ENCODE measurements at regions of chr4 and their contacts with region 1.

Region 1: DNA sequence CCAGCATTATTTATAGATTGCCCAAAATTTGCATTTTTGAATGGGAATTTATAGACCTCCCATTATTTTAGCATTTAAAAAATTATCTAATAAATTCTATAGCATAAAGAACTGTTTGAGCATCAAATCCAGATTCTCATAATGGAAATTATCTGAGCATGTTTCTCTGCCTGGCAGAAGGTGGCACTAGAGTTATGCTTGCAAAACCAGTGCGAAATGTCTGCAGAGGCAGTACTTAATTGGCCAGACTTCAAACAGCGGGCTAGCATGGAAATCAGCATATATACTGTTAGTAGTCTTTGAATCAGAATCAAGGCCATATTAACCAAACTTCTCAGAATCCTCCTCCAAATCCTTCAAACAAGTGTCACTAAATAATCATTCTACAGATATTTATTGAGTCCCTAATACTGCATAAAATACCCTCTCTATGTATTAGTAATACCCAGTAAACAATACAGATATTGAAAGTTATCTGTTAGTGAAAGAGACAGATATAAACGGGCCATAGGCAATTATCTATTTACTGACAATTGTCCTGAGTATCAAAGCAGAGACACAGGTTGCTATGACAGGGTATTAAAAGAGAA is 78.7 kb upstream of the DCLK2 start:
- DNase-seq: peak in 3 of 5 donors; percentile 32 to 37 (median 37)
- ATAC-seq: peak in 3 of 4 donors; percentile 78 to 80 (median 78)
- H3K4me3 ChIP-seq: no peak overlapping the region
- H3K27ac ChIP-seq: no peak overlapping the region
- H3K4me1 ChIP-seq: peaks cover 0 to 10% (median 8%) of the 10 kb centered on the region in 12 donors
- H3K27me3 ChIP-seq: no peaks in the 10 kb centered on the region
- CTCF ChIP-seq: peak; percentile 59 to 83 (median 73)
- POLR2A ChIP-seq: no peak

Region 2: DNA sequence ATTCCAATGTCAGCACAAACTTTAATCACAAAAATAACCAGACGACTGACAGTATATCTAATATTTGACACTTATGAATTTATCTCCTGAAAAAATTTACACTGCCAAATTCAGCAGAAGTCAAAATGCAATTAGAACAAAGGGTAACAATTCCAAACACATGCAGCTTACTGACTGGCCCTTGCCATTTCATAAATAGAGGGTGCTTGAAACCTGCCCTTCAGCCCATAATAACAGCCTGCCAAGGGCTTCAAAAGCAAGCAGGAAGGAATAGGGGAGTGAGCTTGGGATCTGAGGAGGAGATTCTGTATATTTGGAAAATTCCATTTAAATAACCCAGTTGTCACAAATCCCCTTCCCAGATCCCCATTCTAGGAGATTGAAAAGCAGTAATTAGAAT is 117.8 kb before region 1 on chr4:
- intact Hi-C with region 1: no loop called
- DNase-seq: no peak
- ATAC-seq: peak in 3 of 4 donors; percentile 50 to 70 (median 59)
- H3K4me3 ChIP-seq: no peak overlapping the region
- H3K27ac ChIP-seq: peak overlapping the region in 3 of 12 donors; percentile 13 to 20 (median 14)
- H3K4me1 ChIP-seq: peaks cover 0 to 13% (median 0%) of the 10 kb centered on the region in 12 donors
- H3K27me3 ChIP-seq: no peaks in the 10 kb centered on the region
- CTCF ChIP-seq: no peak
- POLR2A ChIP-seq: no peak

Region 3: DNA sequence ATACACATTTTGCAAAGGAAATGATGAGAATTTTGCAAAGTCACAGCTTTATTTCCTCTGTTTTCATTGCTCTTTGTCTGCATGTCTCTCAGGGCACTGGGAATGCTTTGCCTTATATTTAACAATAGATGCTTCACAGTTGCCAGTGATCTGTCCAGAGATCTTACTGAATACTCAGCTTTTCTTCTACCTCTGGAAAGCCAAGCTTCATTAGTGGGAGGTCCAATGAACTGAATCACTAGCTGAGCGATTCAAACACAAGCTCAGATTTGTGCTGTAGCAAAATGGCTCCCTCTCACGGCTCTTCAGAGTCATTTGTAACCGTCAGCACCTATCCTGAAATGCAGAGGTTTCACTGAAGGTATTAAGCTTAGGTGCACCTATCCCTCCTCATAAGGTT is 217.6 kb after region 1 on chr4:
- intact Hi-C with region 1: loop called in 1 of 10 experiments (anchors 5 kb)
- DNase-seq: no peak
- ATAC-seq: peak in 3 of 4 donors; percentile 51 to 63 (median 52)
- H3K4me3 ChIP-seq: no peak overlapping the region
- H3K27ac ChIP-seq: no peak overlapping the region
- H3K4me1 ChIP-seq: peaks cover 0 to 27% (median 5%) of the 10 kb centered on the region in 12 donors
- H3K27me3 ChIP-seq: no peaks in the 10 kb centered on the region
- CTCF ChIP-seq: peak in 9 of 12 donors; percentile 13 to 49 (median 25)
- POLR2A ChIP-seq: no peak

Region 4: GRCh38 chr4:150237110-150237857 is 237.7 kb after region 1 on chr4:
- intact Hi-C with region 1: loop called in 6 of 10 experiments (anchors 2 to 5 kb)
- DNase-seq: no peak
- ATAC-seq: no peak
- H3K4me3 ChIP-seq: no peak overlapping the region
- H3K27ac ChIP-seq: no peak overlapping the region
- H3K4me1 ChIP-seq: peaks cover 0 to 26% (median 6%) of the 10 kb centered on the region in 12 donors
- H3K27me3 ChIP-seq: no peaks in the 10 kb centered on the region
- CTCF ChIP-seq: no peak
- POLR2A ChIP-seq: no peak

Region 5: DNA sequence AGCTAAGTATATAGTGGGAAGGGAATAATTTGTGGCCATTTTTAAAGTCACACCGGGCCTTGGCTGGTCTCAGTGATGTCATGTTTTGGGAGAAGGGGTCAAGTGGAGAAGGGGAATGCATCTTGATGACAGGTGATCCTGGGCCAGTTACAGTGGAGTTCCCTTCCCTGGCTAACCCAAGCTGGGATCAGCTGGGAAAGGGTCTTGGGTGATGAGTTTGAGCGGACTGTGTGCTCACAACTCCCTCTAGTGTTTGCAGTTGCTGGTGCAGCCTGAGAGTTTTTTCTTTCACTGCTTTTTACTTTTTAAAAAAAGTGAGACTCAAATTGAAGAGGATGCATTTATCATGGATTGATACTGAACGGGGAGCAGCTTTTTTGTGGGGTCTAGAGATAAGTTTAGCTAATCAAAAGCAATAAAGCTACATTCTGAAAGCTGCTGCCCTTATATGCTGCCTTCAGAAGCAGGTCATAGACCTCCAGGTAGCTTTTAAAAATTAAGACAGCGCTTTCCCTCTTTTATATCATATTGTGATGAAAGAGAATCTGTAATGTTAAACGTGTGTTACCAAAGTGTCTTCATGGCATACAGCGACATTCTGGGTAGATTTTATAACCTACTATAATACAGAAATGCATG is 243.4 kb after region 1 on chr4:
- intact Hi-C with region 1: loop called in 6 of 10 experiments (anchors 2 to 5 kb)
- DNase-seq: peak in 1 of 5 donors; percentile 47
- ATAC-seq: peak in 3 of 4 donors; percentile 46 to 52 (median 51)
- H3K4me3 ChIP-seq: no peak overlapping the region
- H3K27ac ChIP-seq: no peak overlapping the region
- H3K4me1 ChIP-seq: no peaks in the 10 kb centered on the region
- H3K27me3 ChIP-seq: no peaks in the 10 kb centered on the region
- CTCF ChIP-seq: peak; percentile 71 to 91 (median 88)
- POLR2A ChIP-seq: no peak

Region 6: DNA sequence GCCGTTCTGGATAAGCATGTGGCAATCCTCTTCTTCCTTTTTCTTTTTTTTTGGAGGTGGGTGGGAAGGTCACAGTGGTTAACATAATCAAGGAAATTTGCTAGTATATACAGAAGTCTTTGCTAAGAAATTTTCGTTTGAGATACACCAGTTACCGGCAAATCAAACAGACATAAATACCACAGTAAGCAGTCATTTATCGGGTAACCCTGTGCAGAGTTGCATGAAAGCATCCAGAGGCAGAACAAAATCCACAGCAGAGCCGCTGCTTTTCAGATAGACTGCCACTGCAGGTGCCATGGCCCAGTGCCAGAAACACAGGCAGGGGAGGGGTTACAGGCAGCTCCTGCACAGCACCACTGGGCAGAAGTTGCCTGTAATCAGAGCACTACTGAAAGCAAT is 403.3 kb after region 1 on chr4:
- intact Hi-C with region 1: no loop called
- DNase-seq: peak; percentile 42 to 78 (median 68)
- ATAC-seq: peak; percentile 63 to 75 (median 74)
- H3K4me3 ChIP-seq: no peak overlapping the region
- H3K27ac ChIP-seq: no peak overlapping the region
- H3K4me1 ChIP-seq: peaks cover 0 to 4% (median 0%) of the 10 kb centered on the region in 12 donors
- H3K27me3 ChIP-seq: no peaks in the 10 kb centered on the region
- CTCF ChIP-seq: no peak
- POLR2A ChIP-seq: no peak

Region 7: DNA sequence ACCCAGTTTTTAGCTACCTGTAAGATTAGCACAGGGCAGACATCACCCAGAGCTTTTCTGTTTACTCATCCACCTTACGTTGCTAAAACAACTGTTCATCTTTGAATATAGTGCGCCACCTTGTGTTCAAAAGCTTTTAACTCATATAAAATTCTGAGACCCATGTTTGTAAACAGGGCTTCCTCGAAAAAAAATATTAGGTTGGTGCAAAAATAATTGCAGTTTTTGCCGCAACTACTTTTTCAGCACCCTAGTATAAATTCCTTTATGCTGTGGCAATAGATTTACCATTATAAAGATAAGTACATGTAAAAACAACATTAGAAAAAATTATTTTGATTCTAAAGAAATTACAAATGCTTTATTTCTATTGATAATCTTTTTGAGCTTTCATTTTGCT is 867.6 kb after region 1 on chr4:
- intact Hi-C with region 1: loop called in 8 of 10 experiments (anchors 5 to 10 kb)
- DNase-seq: peak in 1 of 5 donors; percentile 29
- ATAC-seq: peak in 3 of 4 donors; percentile 75 to 78 (median 76)
- H3K4me3 ChIP-seq: no peak overlapping the region
- H3K27ac ChIP-seq: no peak overlapping the region
- H3K4me1 ChIP-seq: no peaks in the 10 kb centered on the region
- H3K27me3 ChIP-seq: no peaks in the 10 kb centered on the region
- CTCF ChIP-seq: peak; percentile 50 to 77 (median 64)
- POLR2A ChIP-seq: no peak

Region 8: DNA sequence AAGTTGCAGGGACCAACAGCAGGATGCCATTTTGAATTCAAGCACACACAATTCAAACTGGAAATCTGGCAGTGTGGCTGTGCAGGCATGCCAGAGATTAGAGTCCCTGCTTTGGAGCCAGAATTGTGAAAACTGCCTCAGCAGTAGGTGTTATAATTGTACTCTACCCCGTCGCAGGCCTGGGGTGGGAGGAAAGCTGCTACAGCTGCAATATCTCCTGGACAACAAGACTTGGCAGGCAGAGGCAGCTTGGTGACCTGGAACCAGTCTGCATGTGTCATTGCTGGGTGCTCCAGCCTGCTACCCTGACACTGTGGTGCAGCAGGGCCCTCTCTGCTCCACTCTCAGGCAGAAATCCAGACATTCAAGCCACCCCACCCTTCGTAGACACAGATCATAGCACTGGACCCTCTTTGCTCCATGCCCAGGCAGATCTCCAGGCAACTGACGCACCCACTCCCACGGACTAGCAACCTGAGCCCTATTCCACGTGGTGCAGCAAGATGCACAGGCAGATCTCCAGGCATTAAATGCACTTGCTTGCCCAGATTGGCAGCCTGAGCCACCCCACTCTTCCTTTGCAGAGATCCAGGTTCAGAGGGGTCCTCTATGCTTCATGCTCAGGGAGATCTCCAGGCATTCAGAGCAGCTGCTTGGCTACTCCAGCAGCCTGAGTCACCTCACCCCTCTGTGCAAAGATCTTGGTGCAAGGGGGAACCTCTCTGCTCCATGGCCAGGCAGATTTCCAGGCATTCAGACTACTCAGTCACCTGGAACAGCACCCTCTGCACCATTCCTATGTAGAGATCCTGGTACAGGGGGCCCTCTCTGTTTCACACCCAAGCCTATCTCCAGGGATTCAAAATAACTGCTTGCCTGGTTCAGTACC is 875.0 kb after region 1 on chr4:
- intact Hi-C with region 1: loop called in 8 of 10 experiments (anchors 5 to 10 kb)
- DNase-seq: peak; percentile 69 to 85 (median 70)
- ATAC-seq: peak; percentile 98 to 99 (median 98)
- H3K4me3 ChIP-seq: peak overlapping the region in 1 of 12 donors; percentile 6
- H3K27ac ChIP-seq: peak overlapping the region in 10 of 12 donors; percentile 8 to 77 (median 68)
- H3K4me1 ChIP-seq: peaks cover 0 to 13% (median 1%) of the 10 kb centered on the region in 12 donors
- H3K27me3 ChIP-seq: no peaks in the 10 kb centered on the region
- CTCF ChIP-seq: no peak
- POLR2A ChIP-seq: no peak

Measured in heart left ventricle (tissue), 16 donors.